ENCODE measurements at regions of chr10 and their contacts with region 1.

Region 1: GRCh38 chr10:93993782-93994437 is at the start of gene PLCE1:
- DNase-seq: no peak
- ATAC-seq: peak; percentile 86
- H3K4me3 ChIP-seq: peak within 1 kb of the TSS; percentile 48 to 62
- H3K27ac ChIP-seq: no peak within 1 kb of the TSS; the same call in 1 of the 2 replicates
- H3K4me1 ChIP-seq: peaks cover 24 to 36% of the 10 kb centered on the region in 2 experiments
- H3K27me3 ChIP-seq: no peaks in the 10 kb centered on the region
- CTCF ChIP-seq: no peak
- POLR2A ChIP-seq: no peak
- RAD21 ChIP-seq: no peak
- total RNA-seq, gene PLCE1: 2.5 TPM

Region 2: DNA sequence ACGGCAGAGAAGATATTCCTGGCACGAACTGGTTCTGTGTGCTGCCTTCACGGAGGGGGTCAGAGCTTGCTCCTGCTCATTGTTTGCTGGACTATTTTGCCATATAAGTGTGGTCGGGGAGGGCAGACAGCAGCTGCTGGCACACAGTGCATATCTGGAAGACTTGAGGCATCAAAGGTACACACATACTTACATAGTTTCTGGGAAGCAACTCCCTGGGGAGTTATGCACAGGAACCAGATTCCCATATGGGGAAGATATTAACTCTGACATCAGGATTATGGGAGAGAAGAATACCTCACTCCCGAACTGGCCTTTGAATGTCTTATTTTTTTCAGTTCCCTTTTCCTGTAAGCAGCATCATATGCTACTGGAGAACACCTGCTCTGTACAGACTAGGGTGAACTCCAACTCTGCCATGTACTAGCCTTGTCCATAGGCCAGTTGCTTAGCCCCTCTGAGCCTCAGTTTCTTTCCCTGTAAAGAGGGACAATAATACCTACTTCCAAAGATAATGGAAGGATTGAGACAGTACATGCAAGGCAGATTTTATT is 194.7 kb before region 1 on chr10:
- CTCF ChIA-PET with region 1: no interaction called
- POLR2A ChIA-PET with region 1: no interaction called
- RAD21 ChIA-PET with region 1: no interaction called
- intact Hi-C with region 1: no loop called
- DNase-seq: no peak
- ATAC-seq: no peak
- H3K4me3 ChIP-seq: no peak overlapping the region
- H3K27ac ChIP-seq: no peak overlapping the region
- H3K4me1 ChIP-seq: no peaks in the 10 kb centered on the region
- H3K27me3 ChIP-seq: peaks cover 7% of the 10 kb centered on the region; the same call in 1 of the 2 replicates
- CTCF ChIP-seq: no peak
- POLR2A ChIP-seq: no peak
- RAD21 ChIP-seq: no peak

Region 3: DNA sequence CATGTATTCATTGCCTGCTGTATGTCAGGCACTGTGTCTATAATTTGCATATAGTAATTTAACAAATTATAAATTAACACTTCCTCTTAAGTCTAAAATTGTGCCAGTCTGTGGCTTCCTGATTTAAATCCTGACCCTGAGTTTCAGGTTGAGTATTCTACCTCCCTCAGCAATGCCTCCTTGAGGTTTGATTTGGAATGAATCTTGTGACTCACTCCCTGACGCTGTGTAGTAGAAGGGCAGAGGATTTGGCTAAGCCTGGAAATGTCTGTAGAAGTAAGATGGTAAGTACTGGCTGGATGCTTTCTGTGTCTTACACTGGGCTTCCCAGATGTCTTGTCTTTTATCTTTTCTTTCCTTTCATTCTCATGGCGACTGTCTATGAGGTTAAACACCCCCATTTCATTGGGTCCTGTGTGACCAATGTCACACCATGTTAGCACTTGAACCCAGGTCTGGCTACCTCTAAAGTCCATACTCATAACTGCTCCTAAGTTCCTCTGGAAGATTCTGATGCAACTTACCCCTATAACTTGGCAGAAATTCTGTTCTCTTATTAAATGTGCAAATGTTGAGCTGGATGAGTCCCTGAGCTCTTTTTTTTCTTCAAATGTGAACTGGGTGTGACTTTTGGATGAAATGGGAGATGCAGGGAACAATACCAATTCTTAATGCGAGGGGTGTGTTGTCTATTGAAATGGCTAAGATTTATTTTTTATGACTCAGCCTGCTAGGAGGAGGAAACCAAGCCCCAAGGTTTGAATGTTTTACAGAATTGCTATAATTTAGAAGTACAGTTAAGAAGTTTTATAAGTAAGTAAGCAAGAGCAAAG is 48.3 kb after region 1 on chr10:
- CTCF ChIA-PET with region 1: no interaction called
- POLR2A ChIA-PET with region 1: no interaction called
- RAD21 ChIA-PET with region 1: no interaction called
- intact Hi-C with region 1: loop called (anchors 5 kb)
- DNase-seq: peak; percentile 12
- ATAC-seq: peak; percentile 72
- H3K4me3 ChIP-seq: no peak overlapping the region
- H3K27ac ChIP-seq: no peak overlapping the region
- H3K4me1 ChIP-seq: peaks cover 6 to 20% of the 10 kb centered on the region in 2 experiments; a peak in 3 of 4 replicates
- H3K27me3 ChIP-seq: no peaks in the 10 kb centered on the region
- CTCF ChIP-seq: peak in 2 of 3 experiments; percentile 15 to 28; a peak in 2 of 6 replicates
- POLR2A ChIP-seq: no peak
- RAD21 ChIP-seq: no peak

Region 4: GRCh38 chr10:94115725-94116124 is 121.8 kb after region 1 on chr10:
- CTCF ChIA-PET with region 1: no interaction called
- POLR2A ChIA-PET with region 1: no interaction called
- RAD21 ChIA-PET with region 1: no interaction called
- intact Hi-C with region 1: no loop called
- DNase-seq: peak; percentile 40
- ATAC-seq: peak; percentile 54
- H3K4me3 ChIP-seq: no peak overlapping the region
- H3K27ac ChIP-seq: no peak overlapping the region
- H3K4me1 ChIP-seq: peaks cover 0 to 7% of the 10 kb centered on the region in 2 experiments; a peak in 2 of 4 replicates
- H3K27me3 ChIP-seq: no peaks in the 10 kb centered on the region
- CTCF ChIP-seq: no peak
- POLR2A ChIP-seq: no peak
- RAD21 ChIP-seq: no peak

Region 5: GRCh38 chr10:94443047-94443446 is 449.1 kb after region 1 on chr10:
- CTCF ChIA-PET with region 1: no interaction called
- POLR2A ChIA-PET with region 1: no interaction called
- RAD21 ChIA-PET with region 1: no interaction called
- intact Hi-C with region 1: no loop called
- DNase-seq: no peak
- ATAC-seq: no peak
- H3K4me3 ChIP-seq: no peak overlapping the region
- H3K27ac ChIP-seq: no peak overlapping the region
- H3K4me1 ChIP-seq: no peaks in the 10 kb centered on the region
- H3K27me3 ChIP-seq: no peaks in the 10 kb centered on the region
- CTCF ChIP-seq: no peak
- POLR2A ChIP-seq: no peak
- RAD21 ChIP-seq: no peak